GM12878 (cell line): ENCODE measurements at regions of chrX and their contacts with region 1.

Region 1: GRCh38 chrX:30513284-30513683 is 64.3 kb downstream of the TASL start:
- DNase-seq: no peak
- ATAC-seq: peak; percentile 84
- H3K4me3 ChIP-seq: no peak overlapping the region
- H3K27ac ChIP-seq: no peak overlapping the region
- H3K4me1 ChIP-seq: no peaks in the 10 kb centered on the region
- H3K27me3 ChIP-seq: no peaks in the 10 kb centered on the region
- CTCF ChIP-seq: peak; percentile 51 to 61 (median 57)
- EP300 ChIP-seq: no peak
- POLR2A ChIP-seq: no peak
- RAD21 ChIP-seq: peak; percentile 40

Region 2: GRCh38 chrX:30618156-30618765 is 105.0 kb after region 1 on chrX:
- CTCF ChIA-PET with region 1: interaction called, 5 read pairs
- POLR2A ChIA-PET with region 1: no interaction called
- RAD21 ChIA-PET with region 1: no interaction called
- SMC1A ChIA-PET with region 1: interaction called, 3 read pairs
- in situ Hi-C with region 1: no loop called
- intact Hi-C with region 1: loop called (anchors 2 kb)
- DNase-seq: no peak
- ATAC-seq: peak; percentile 79
- H3K4me3 ChIP-seq: no peak overlapping the region
- H3K27ac ChIP-seq: no peak overlapping the region
- H3K4me1 ChIP-seq: no peaks in the 10 kb centered on the region
- H3K27me3 ChIP-seq: no peaks in the 10 kb centered on the region
- CTCF ChIP-seq: peak; percentile 23 to 30 (median 27); a peak in 3 of 6 replicates
- EP300 ChIP-seq: no peak
- POLR2A ChIP-seq: no peak
- RAD21 ChIP-seq: peak; percentile 44